Stomach (tissue), 19 donors: ENCODE measurements at regions of chr4 and their contacts with region 1.

Region 1: GRCh38 chr4:179941911-179942310 is 2301.3 kb upstream of the TENM3 start:
- DNase-seq: no peak
- H3K4me3 ChIP-seq: no peak overlapping the region
- H3K27ac ChIP-seq: no peak overlapping the region
- H3K4me1 ChIP-seq: no peaks in the 10 kb centered on the region
- H3K27me3 ChIP-seq: no peaks in the 10 kb centered on the region
- CTCF ChIP-seq: no peak
- EP300 ChIP-seq: no peak
- POLR2A ChIP-seq: no peak

Region 2: DNA sequence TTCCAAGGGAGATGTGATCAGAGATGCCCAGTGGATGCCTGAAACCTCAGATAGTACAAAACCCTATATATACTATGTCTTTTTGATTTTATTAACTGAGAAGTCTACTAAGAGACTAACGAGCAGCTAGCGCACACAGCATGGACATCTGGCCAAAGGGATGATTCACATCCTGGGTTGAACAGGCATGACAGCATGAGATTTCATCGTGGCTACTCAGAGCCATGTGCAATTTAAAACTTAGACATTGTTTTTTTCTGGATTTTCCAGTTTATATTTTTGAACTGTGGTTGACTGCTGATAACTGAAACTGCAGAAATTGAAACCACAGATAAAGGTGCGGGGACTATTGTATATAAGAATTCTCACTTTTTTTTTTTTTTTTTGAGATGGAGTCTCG is 246.7 kb before region 1 on chr4:
- intact Hi-C with region 1: loop called (anchors 10 kb)
- DNase-seq: no peak
- H3K4me3 ChIP-seq: no peak overlapping the region
- H3K27ac ChIP-seq: no peak overlapping the region
- H3K4me1 ChIP-seq: no peaks in the 10 kb centered on the region
- H3K27me3 ChIP-seq: no peaks in the 10 kb centered on the region
- CTCF ChIP-seq: no peak
- EP300 ChIP-seq: no peak
- POLR2A ChIP-seq: no peak